ENCODE measurements at regions of chr11 and their contacts with region 1.

Region 1: GRCh38 chr11:3767536-3767935 is 29.8 kb downstream of the NUP98 start:
- DNase-seq: no peak
- ATAC-seq: no peak
- H3K4me3 ChIP-seq: no peak overlapping the region
- H3K27ac ChIP-seq: no peak overlapping the region
- H3K4me1 ChIP-seq: no peaks in the 10 kb centered on the region
- H3K27me3 ChIP-seq: no peaks in the 10 kb centered on the region
- CTCF ChIP-seq: no peak

Region 2: DNA sequence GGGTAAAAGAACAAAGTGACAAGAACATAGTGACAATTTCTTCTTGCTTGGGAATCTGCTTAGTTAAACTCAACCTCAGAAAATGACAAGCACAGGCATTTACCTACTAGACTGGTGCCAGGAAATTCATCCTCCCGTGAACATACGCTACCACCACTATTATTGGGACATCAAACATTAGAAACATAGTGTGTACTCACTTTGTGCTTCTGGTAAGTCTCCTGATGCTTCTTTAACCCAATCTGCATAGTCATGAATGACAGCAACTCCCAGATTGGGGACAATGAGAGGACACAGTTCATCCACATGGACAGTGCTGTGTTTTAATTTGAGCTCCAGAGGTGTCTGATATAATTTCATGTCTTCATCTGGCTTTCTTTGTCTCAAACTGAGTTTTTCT is 67.1 kb before region 1 on chr11:
- intact Hi-C with region 1: no loop called
- DNase-seq: no peak
- ATAC-seq: no peak
- H3K4me3 ChIP-seq: no peak overlapping the region
- H3K27ac ChIP-seq: no peak overlapping the region
- H3K4me1 ChIP-seq: no peaks in the 10 kb centered on the region
- H3K27me3 ChIP-seq: no peaks in the 10 kb centered on the region
- CTCF ChIP-seq: no peak

Region 3: DNA sequence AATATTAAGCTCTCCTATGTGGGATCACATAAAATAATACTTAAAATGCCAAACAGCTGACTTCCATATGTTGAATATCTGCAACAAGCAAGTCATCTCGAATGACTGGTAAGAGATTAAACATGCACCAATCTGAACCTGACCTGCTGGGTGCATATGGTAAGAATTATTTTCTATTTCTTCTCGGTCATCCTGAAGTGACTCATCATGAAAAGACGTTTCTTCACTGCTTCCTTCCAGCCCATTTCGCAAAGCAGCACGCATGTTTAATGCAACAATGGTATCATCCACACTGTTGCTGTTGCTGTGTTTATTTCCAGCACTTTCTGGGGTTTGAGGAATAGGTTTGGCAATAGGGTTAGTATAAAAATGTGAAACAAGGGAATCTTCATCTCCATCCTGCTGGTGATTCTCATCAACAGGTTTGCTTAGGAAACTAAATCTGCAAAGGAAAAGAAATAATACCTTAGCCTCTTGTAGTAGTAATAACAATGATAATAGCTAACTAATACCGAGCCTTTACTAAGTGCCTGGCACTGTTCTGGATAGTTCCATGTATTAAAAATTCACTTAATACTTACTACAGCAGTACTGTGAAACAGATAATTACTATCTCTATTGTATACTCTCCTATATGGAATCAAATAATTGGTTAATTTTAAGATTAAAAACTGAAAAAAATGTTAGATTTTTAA is 44.4 kb before region 1 on chr11:
- intact Hi-C with region 1: loop called (anchors 5 kb)
- DNase-seq: no peak
- ATAC-seq: peak; percentile 77
- H3K4me3 ChIP-seq: no peak overlapping the region
- H3K27ac ChIP-seq: peak overlapping the region; percentile 37
- H3K4me1 ChIP-seq: no peaks in the 10 kb centered on the region
- H3K27me3 ChIP-seq: no peaks in the 10 kb centered on the region
- CTCF ChIP-seq: no peak

Region 4: GRCh38 chr11:3807909-3808860 is 40.6 kb after region 1 on chr11 and contains the start of gene PGAP2:
- intact Hi-C with region 1: no loop called
- DNase-seq: peak; percentile 87
- ATAC-seq: peak; percentile 84
- H3K4me3 ChIP-seq: peak within 1 kb of the TSS; percentile 75
- H3K27ac ChIP-seq: peak within 1 kb of the TSS; percentile 67
- H3K4me1 ChIP-seq: peaks cover 13% of the 10 kb centered on the region
- H3K27me3 ChIP-seq: no peaks in the 10 kb centered on the region
- CTCF ChIP-seq: peak; percentile 73
- total RNA-seq, gene PGAP2: 25.0 TPM